ENCODE measurements at regions of chr1 and their contacts with region 1.

Region 1: DNA sequence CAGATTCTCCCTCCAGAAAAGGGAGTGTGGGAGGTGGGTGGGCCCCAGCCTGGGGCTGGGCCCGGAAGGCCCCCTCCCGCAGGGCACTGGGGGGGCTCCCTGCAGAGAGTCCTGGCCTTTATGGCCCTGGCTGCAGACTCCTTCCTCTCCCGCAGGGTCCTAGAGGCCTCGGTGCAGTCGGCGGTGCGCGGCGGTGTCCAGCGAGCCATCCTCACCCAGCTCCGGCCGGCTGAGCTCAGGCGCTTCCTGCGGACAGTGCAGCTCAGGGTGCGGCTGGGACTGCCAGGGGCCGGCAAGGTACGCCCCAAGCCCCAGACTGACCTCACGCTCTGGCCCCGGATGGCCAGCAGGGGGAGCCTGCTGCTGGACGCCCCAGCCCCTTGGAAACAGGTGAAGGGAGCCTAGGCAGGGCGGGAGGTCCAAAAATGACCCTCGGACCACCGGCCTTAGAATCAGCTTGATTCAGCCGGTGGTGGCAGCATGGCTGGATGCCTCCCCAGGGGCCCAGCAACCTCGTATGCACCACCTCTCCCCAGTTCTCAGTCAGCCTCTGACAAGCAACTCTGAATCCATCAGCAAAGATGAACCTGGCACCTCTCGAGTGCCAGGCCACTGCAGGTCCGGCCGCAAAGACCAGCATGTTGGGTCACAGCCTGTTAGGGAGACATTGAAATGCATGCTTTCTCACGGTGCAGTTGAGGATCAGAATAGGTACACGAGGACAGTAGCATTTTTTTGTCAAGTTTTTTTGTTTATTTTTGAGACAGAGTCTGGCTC is 20.6 kb downstream of the MTHFR start:
- DNase-seq: peak; percentile 92
- ATAC-seq: peak; percentile 88
- H3K4me3 Mint-ChIP-seq: peak overlapping the region; percentile 30; the same call in 1 of the 2 replicates
- H3K27ac Mint-ChIP-seq: peak overlapping the region; percentile 70; the same call in 1 of the 2 replicates
- H3K4me1 Mint-ChIP-seq: peaks cover 32% of the 10 kb centered on the region
- H3K27me3 Mint-ChIP-seq: no peaks in the 10 kb centered on the region
- CTCF ChIP-seq: peak; percentile 88

Region 2: GRCh38 chr1:11693024-11693590 is 92.1 kb before region 1 on chr1:
- CTCF ChIA-PET with region 1: interaction called, 10 read pairs
- POLR2A ChIA-PET with region 1: interaction called, 3 read pairs
- DNase-seq: no peak
- ATAC-seq: no peak
- H3K4me3 Mint-ChIP-seq: peak overlapping the region; percentile 89
- H3K27ac Mint-ChIP-seq: 0 out of 2 replicates have a peak overlapping the region, but pooled peaks have one; percentile 0
- H3K4me1 Mint-ChIP-seq: peaks cover 55% of the 10 kb centered on the region
- H3K27me3 Mint-ChIP-seq: no peaks in the 10 kb centered on the region
- CTCF ChIP-seq: no peak

Region 3: GRCh38 chr1:11719313-11720032 is 65.7 kb before region 1 on chr1:
- CTCF ChIA-PET with region 1: interaction called, 11 read pairs
- POLR2A ChIA-PET with region 1: no interaction called
- DNase-seq: peak; percentile 81
- ATAC-seq: peak; percentile 75
- H3K4me3 Mint-ChIP-seq: peak overlapping the region; percentile 51
- H3K27ac Mint-ChIP-seq: no peak overlapping the region
- H3K4me1 Mint-ChIP-seq: peaks cover 9% of the 10 kb centered on the region
- H3K27me3 Mint-ChIP-seq: no peaks in the 10 kb centered on the region; the same call in 1 of the 2 replicates
- CTCF ChIP-seq: peak; percentile 96

Region 4: GRCh38 chr1:11735854-11736745 is 49.1 kb before region 1 on chr1 and contains the start of gene AGTRAP:
- CTCF ChIA-PET with region 1: interaction called, 19 read pairs
- POLR2A ChIA-PET with region 1: no interaction called
- DNase-seq: peak; percentile 98
- ATAC-seq: peak; percentile 73
- H3K4me3 Mint-ChIP-seq: peak within 1 kb of the TSS; percentile 94
- H3K27ac Mint-ChIP-seq: peak within 1 kb of the TSS; percentile 93
- H3K4me1 Mint-ChIP-seq: peaks cover 47% of the 10 kb centered on the region
- H3K27me3 Mint-ChIP-seq: no peaks in the 10 kb centered on the region; the same call in 1 of the 2 replicates
- CTCF ChIP-seq: no peak
- total RNA-seq, gene AGTRAP: 81.6 to 102 TPM (median 101 TPM) in 3 replicates

Region 5: DNA sequence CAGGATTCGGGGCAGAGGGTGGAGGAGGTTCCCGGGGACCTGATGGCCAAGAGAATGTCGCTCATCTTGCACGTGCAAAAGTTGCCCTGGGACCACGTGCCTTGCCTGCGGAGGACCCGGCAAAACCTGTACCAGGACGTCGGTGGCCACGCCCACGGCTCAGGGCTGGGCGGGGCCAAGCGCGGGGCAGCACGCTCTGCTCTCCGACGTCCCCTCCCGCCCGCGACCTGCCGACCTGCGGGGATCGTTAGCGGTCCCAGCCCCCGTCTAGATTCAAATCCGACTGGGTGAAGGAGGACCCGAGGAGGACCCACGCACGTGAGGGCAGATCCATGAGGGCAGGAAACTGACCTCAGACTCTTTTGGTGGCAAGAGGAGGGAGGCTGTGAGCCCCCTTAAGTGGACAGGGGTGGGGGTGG is 23.2 kb before region 1 on chr1 and contains the start of gene C1orf167:
- CTCF ChIA-PET with region 1: interaction called, 41 read pairs
- POLR2A ChIA-PET with region 1: no interaction called
- DNase-seq: peak; percentile 73
- ATAC-seq: peak; percentile 87
- H3K4me3 Mint-ChIP-seq: peak within 1 kb of the TSS; percentile 56
- H3K27ac Mint-ChIP-seq: no peak within 1 kb of the TSS
- H3K4me1 Mint-ChIP-seq: peaks cover 10% of the 10 kb centered on the region
- H3K27me3 Mint-ChIP-seq: peaks cover 59% of the 10 kb centered on the region
- CTCF ChIP-seq: no peak
- total RNA-seq, gene C1orf167: 1.2 to 3.1 TPM (median 2.8 TPM) in 3 replicates

Region 6: DNA sequence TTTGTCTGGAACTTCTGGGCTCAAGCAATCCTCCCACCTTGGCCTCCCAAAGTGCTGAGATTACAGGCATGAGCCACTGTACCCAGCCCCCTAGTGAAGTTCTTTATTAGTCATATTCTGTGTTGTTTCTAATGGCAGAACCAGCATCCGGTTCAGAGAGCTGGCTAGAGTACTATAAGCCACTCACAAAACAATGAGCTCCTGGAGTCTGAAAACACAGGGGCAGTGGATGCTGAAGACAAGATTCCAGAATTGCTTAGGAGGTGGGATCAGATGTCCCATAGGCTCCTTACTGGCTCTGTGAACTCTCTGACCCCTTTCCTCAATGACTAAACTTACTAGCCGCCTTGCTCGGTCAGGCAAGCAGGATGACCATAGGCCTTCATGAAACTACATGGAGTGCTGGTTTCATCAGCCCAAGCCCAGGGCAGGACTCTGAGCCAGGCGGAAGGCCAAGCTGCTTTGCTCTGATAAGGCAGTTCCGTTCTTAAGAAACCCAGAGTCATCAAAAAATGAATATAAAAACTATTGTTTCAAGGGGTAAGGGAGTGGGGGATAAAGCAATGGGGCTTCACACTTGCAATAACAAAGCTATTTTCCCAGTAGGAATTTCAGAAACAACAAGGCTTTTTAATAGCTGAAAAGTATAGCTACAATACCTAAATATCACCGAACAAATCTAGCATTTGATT is 12.5 kb after region 1 on chr1:
- CTCF ChIA-PET with region 1: interaction called, 98 read pairs
- POLR2A ChIA-PET with region 1: interaction called, 11 read pairs
- DNase-seq: no peak
- ATAC-seq: no peak
- H3K4me3 Mint-ChIP-seq: no peak overlapping the region
- H3K27ac Mint-ChIP-seq: no peak overlapping the region
- H3K4me1 Mint-ChIP-seq: peaks cover 10% of the 10 kb centered on the region
- H3K27me3 Mint-ChIP-seq: no peaks in the 10 kb centered on the region
- CTCF ChIP-seq: no peak